ENCODE measurements at regions of chr4 and their contacts with region 1.

Region 1: GRCh38 chr4:89765966-89766365 is 71.0 kb downstream of the SNCA start:
- DNase-seq: peak in 1 of 2 donors; percentile 42
- H3K4me3 ChIP-seq: no peak overlapping the region
- CTCF ChIP-seq: no peak
- POLR2A ChIP-seq: no peak

Region 2: GRCh38 chr4:89820010-89820409 is 54.0 kb after region 1 on chr4:
- intact Hi-C with region 1: loop called (anchors 2 kb)
- DNase-seq: no peak
- H3K4me3 ChIP-seq: no peak overlapping the region
- CTCF ChIP-seq: no peak
- POLR2A ChIP-seq: no peak

Measured in lower leg skin (tissue), 4 donors.